HEK293 (cell line): ENCODE measurements at regions of chr1 and their contacts with region 1.

Region 1: GRCh38 chr1:67149179-67149770 is 14.5 kb upstream of the C1orf141 start:
- H3K4me3 ChIP-seq: no peak overlapping the region
- H3K27ac ChIP-seq: no peak overlapping the region
- H3K4me1 ChIP-seq: no peaks in the 10 kb centered on the region
- CTCF ChIP-seq: peak; percentile 90

Region 2: DNA sequence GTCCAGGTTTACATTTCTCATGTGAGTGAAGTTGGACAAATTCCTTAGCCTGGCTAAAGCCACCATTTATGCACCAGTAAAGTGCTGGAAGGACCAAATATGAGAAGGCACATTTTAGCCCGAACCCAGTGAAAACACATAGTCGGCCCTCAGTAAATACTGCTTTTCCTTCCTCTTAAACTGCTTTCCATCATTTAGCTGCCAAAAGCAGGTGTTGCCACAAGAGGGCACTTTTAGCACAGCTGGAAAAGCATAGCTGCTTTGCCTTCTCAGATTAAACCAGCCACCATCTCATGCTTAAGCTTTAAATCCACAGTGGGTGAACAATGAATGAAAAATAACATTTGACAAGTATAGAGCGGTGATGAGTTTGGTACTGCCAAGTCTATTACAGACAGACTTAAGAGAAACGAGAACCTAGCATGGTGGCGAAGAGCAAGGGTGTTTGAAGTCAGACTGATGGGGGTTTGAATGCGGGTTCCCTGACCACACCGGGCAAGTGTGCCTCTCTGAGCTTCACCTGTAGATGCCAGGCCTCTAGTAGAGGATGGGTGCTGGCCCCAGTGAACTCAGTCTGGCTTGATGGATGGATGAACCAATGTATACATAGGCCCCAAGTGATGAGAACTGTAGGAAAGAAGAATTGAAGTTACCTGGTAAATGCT is 153.1 kb before region 1 on chr1:
- CTCF ChIA-PET with region 1: interaction called, 56 read pairs
- POLR2A ChIA-PET with region 1: interaction called, 3 read pairs
- H3K4me3 ChIP-seq: no peak overlapping the region
- H3K27ac ChIP-seq: no peak overlapping the region
- H3K4me1 ChIP-seq: no peaks in the 10 kb centered on the region
- CTCF ChIP-seq: peak; percentile 65; the same call in 1 of the 2 replicates

Region 3: DNA sequence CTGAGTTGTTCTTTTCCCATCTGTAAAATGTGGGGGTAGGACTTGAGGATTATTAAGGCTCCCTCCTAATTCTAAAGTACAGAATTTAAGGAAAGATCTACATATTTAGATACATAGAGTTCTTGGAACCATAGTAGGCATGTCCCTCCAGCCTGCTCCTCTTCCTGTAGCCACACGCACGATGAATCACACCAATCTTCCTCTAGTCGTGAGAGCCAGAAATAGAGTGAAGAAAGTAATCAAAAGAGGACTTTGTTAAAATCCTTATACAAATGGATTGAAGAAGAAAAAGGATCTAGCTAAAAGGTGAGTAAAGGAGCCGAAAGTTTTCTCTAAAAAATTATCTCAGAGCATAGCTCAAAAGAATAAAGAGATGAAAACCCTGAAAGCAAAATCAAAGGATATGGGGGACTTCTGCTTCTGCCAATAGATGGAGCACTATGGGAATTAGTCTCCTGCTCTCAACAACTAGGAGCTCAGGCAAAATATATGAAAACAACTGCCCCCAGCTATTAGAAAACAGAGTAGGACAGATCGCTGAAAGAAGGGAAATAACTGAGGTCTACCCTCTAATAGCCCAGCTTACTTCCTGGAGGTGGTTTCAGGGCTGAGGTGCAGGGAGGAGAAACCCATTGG is 23.0 kb before region 1 on chr1:
- CTCF ChIA-PET with region 1: interaction called, 13 read pairs
- POLR2A ChIA-PET with region 1: interaction called, 3 read pairs
- H3K4me3 ChIP-seq: no peak overlapping the region
- H3K27ac ChIP-seq: no peak overlapping the region
- H3K4me1 ChIP-seq: no peaks in the 10 kb centered on the region
- CTCF ChIP-seq: no peak

Region 4: GRCh38 chr1:67162957-67163356 is 13.7 kb after region 1 on chr1:
- CTCF ChIA-PET with region 1: interaction called, 11 read pairs
- POLR2A ChIA-PET with region 1: no interaction called
- H3K4me3 ChIP-seq: no peak overlapping the region
- H3K27ac ChIP-seq: no peak overlapping the region
- H3K4me1 ChIP-seq: no peaks in the 10 kb centered on the region
- CTCF ChIP-seq: no peak

Region 5: DNA sequence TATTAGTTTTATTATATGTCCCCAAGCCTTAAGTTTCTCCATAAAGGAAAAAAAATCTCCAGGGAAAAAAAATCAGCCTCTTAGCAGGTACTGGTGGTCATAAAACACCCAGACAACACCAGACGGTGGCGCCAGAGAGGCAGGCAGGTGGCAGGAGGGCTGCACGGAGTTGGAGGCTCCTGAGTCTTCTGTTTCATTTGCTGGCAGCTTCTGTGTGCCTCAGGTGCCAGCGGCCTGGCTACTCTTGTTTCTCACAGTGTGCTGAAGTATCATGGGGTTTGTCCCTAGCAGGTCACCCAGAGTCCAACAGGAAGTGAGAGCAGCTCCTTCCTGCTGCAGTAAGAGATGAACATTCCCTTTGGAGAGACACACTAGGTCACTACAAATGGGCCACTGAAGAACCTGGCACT is 412.4 kb after region 1 on chr1:
- CTCF ChIA-PET with region 1: no interaction called
- POLR2A ChIA-PET with region 1: no interaction called
- H3K4me3 ChIP-seq: no peak overlapping the region
- H3K27ac ChIP-seq: no peak overlapping the region
- H3K4me1 ChIP-seq: no peaks in the 10 kb centered on the region
- CTCF ChIP-seq: peak; percentile 54; the same call in 1 of the 2 replicates